ENCODE measurements at regions of chr14 and their contacts with region 1.

Region 1: GRCh38 chr14:98167705-98168104 is 1104.3 kb downstream of the BCL11B start:
- DNase-seq: peak in 5 of 9 experiments; percentile 42 to 69 (median 43)
- ATAC-seq: peak; percentile 17
- H3K4me3 ChIP-seq: peak overlapping the region; percentile 13 to 18
- H3K4me3 Mint-ChIP-seq: peak overlapping the region; percentile 64
- H3K27ac ChIP-seq: peak overlapping the region; percentile 39 to 56
- H3K27ac Mint-ChIP-seq: peak overlapping the region; percentile 99
- H3K4me1 ChIP-seq: peaks cover 80% of the 10 kb centered on the region
- H3K4me1 Mint-ChIP-seq: peaks cover 95% of the 10 kb centered on the region
- H3K27me3 ChIP-seq: no peaks in the 10 kb centered on the region
- H3K27me3 Mint-ChIP-seq: no peaks in the 10 kb centered on the region
- CTCF ChIP-seq: no peak

Region 2: GRCh38 chr14:98144964-98145363 is 22.7 kb before region 1 on chr14:
- CTCF ChIA-PET with region 1: interaction called, 76 read pairs
- POLR2A ChIA-PET with region 1: interaction called, 26 read pairs
- intact Hi-C with region 1: loop called in 1 of 2 experiments (anchors 1 kb)
- DNase-seq: no peak
- ATAC-seq: no peak
- H3K4me3 ChIP-seq: no peak overlapping the region
- H3K4me3 Mint-ChIP-seq: no peak overlapping the region
- H3K27ac ChIP-seq: no peak overlapping the region
- H3K27ac Mint-ChIP-seq: peak overlapping the region; percentile 88
- H3K4me1 ChIP-seq: peaks cover 60% of the 10 kb centered on the region
- H3K4me1 Mint-ChIP-seq: peaks cover 71% of the 10 kb centered on the region
- H3K27me3 ChIP-seq: no peaks in the 10 kb centered on the region
- H3K27me3 Mint-ChIP-seq: no peaks in the 10 kb centered on the region
- CTCF ChIP-seq: no peak

Region 3: GRCh38 chr14:98309591-98309990 is 141.9 kb after region 1 on chr14:
- CTCF ChIA-PET with region 1: no interaction called
- POLR2A ChIA-PET with region 1: no interaction called
- intact Hi-C with region 1: no loop called
- DNase-seq: no peak
- ATAC-seq: no peak
- H3K4me3 ChIP-seq: no peak overlapping the region
- H3K4me3 Mint-ChIP-seq: no peak overlapping the region
- H3K27ac ChIP-seq: no peak overlapping the region
- H3K27ac Mint-ChIP-seq: no peak overlapping the region
- H3K4me1 ChIP-seq: no peaks in the 10 kb centered on the region
- H3K4me1 Mint-ChIP-seq: peaks cover 8% of the 10 kb centered on the region
- H3K27me3 ChIP-seq: no peaks in the 10 kb centered on the region
- H3K27me3 Mint-ChIP-seq: no peaks in the 10 kb centered on the region
- CTCF ChIP-seq: no peak